Common myeloid progenitor, CD34-positive (primary cell): ENCODE measurements at regions of chr12 and their contacts with region 1.

Region 1: GRCh38 chr12:124347716-124348357 is 52.9 kb downstream of the RFLNA start:
- DNase-seq: no peak
- H3K4me3 ChIP-seq: no peak overlapping the region
- H3K27ac ChIP-seq: no peak overlapping the region
- H3K4me1 ChIP-seq: peaks cover 0 to 3% (median 2%) of the 10 kb centered on the region in 4 experiments
- H3K27me3 ChIP-seq: no peaks in the 10 kb centered on the region

Region 2: GRCh38 chr12:124311292-124312109 is 36.3 kb before region 1 on chr12:
- CTCF ChIA-PET with region 1: no interaction called
- POLR2A ChIA-PET with region 1: no interaction called
- DNase-seq: no peak
- H3K4me3 ChIP-seq: no peak overlapping the region
- H3K27ac ChIP-seq: no peak overlapping the region
- H3K4me1 ChIP-seq: no peaks in the 10 kb centered on the region
- H3K27me3 ChIP-seq: peaks cover 0 to 2% (median 0%) of the 10 kb centered on the region in 5 experiments

Region 3: DNA sequence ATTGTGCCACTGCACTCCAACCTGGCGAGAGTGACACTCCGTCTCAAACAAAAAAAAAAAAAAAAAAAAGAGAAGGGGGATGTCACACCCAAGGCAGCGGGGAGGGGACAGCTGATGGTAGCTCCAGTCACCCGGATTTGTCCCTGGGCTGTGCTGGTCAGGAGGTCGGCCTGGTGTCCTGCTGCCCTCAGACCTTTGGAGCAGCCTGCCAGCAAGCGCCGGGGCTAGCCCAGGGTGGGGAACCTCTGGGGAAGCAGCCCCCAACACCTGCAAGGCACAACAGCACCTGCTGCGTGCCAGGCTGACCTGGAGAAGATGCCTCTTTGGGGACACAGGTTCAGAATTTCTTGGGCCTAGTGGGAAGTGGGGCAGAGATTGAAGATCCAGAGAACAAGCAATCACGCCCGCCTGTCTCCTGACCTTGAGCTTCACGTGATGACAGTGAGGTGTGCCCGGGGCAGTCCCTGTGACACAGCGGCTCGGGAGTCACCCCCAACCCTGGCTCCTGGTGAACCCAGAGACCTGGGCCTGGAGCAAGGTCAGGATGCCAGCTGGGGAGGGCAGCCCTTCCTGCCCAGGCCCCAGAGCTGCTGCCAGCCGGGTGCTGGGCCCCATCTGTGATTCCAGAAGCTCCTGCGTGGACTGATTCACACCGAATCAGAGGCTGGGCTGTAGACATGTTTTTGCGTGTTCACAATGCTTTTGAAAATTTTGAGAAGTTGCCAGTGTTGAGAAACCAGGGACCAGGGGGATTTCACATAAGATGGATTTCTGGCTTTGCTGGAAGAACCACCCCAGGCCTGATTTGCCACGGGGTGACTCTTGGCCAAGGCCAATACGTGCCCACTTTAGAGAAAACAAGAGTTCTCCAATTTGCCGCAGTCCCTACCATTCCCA is 13.5 kb after region 1 on chr12:
- CTCF ChIA-PET with region 1: interaction called, 31 read pairs
- POLR2A ChIA-PET with region 1: no interaction called
- DNase-seq: no peak
- H3K4me3 ChIP-seq: no peak overlapping the region
- H3K27ac ChIP-seq: no peak overlapping the region
- H3K4me1 ChIP-seq: no peaks in the 10 kb centered on the region
- H3K27me3 ChIP-seq: no peaks in the 10 kb centered on the region